ENCODE measurements at regions of chr15 and their contacts with region 1.

Region 1: DNA sequence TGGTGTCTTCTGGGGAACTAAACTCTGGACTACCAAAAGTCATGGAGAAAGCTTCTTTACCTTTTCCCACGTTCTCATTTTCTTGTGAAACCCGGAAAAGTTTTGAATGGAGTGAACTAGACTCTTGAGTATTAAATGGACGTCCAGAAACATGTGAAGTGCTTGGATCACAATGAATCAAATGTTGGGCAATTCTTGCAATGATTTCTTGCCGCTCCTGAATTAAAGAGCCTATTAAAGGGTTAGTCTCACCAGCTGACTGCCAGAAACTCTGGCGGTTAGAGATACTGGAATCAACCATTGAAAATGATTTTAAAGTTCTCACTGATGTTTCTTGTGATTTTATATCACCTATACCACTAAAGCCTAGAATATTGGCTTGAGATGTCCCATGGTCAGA is 40.8 kb upstream of the ARPP19 start:
- DNase-seq: no peak
- ATAC-seq: no peak
- H3K4me3 ChIP-seq: no peak overlapping the region
- H3K4me3 Mint-ChIP-seq: no peak overlapping the region
- H3K27ac ChIP-seq: no peak overlapping the region
- H3K27ac Mint-ChIP-seq: no peak overlapping the region
- H3K4me1 ChIP-seq: no peaks in the 10 kb centered on the region
- H3K4me1 Mint-ChIP-seq: no peaks in the 10 kb centered on the region
- H3K27me3 ChIP-seq: no peaks in the 10 kb centered on the region
- H3K27me3 Mint-ChIP-seq: no peaks in the 10 kb centered on the region

Region 2: DNA sequence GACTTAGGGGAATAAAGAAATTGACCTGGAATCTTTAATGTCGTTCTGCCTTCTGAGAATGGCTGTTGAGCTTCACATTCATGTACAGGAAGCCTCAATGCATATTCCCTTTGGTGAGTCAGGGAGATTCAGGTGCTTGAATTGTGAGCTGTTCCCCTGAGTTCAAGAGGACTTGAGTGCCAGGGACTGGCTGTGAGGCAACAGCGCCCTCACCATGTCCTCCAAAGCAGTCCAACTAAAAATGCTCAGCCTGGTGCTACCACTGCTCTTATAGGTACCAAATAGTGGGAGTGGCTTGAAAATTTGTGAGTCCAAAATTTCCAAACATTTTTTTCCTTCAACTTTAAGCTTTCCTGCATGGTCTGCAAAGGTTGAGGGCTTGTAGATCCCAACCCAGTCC is 692.1 kb before region 1 on chr15:
- CTCF ChIA-PET with region 1: no interaction called
- POLR2A ChIA-PET with region 1: no interaction called
- intact Hi-C with region 1: loop called in 1 of 2 experiments (anchors 10 kb)
- DNase-seq: peak in 1 of 9 donors; percentile 4
- ATAC-seq: no peak
- H3K4me3 ChIP-seq: no peak overlapping the region
- H3K4me3 Mint-ChIP-seq: no peak overlapping the region
- H3K27ac ChIP-seq: no peak overlapping the region
- H3K27ac Mint-ChIP-seq: no peak overlapping the region
- H3K4me1 ChIP-seq: no peaks in the 10 kb centered on the region
- H3K4me1 Mint-ChIP-seq: no peaks in the 10 kb centered on the region
- H3K27me3 ChIP-seq: no peaks in the 10 kb centered on the region
- H3K27me3 Mint-ChIP-seq: no peaks in the 10 kb centered on the region

Region 3: GRCh38 chr15:52568601-52569256 is 40.9 kb before region 1 on chr15 and contains the start of gene ARPP19:
- CTCF ChIA-PET with region 1: no interaction called
- POLR2A ChIA-PET with region 1: no interaction called
- intact Hi-C with region 1: no loop called
- DNase-seq: peak; percentile 58 to 81 (median 76)
- ATAC-seq: peak; percentile 83
- H3K4me3 ChIP-seq: peak within 1 kb of the TSS; percentile 75
- H3K4me3 Mint-ChIP-seq: peak within 1 kb of the TSS; percentile 89 to 100 (median 96)
- H3K27ac ChIP-seq: peak within 1 kb of the TSS; percentile 98
- H3K27ac Mint-ChIP-seq: peak within 1 kb of the TSS; percentile 95 to 100 (median 100)
- H3K4me1 ChIP-seq: peaks cover 13 to 25% of the 10 kb centered on the region in 2 donors
- H3K4me1 Mint-ChIP-seq: peaks cover 28 to 46% (median 42%) of the 10 kb centered on the region in 7 donors
- H3K27me3 ChIP-seq: no peaks in the 10 kb centered on the region
- H3K27me3 Mint-ChIP-seq: peaks cover 0 to 3% (median 0%) of the 10 kb centered on the region in 5 donors
- total RNA-seq, gene ARPP19: 94.9 to 148 (median 122) TPM

Region 4: GRCh38 chr15:52730173-52730572 is 120.6 kb after region 1 on chr15:
- CTCF ChIA-PET with region 1: no interaction called
- POLR2A ChIA-PET with region 1: no interaction called
- intact Hi-C with region 1: loop called (anchors 5 to 10 kb)
- DNase-seq: peak in 7 of 9 donors; percentile 53 to 82 (median 75)
- ATAC-seq: peak; percentile 96
- H3K4me3 ChIP-seq: no peak overlapping the region
- H3K4me3 Mint-ChIP-seq: peak overlapping the region; percentile 10 to 69 (median 50)
- H3K27ac ChIP-seq: no peak overlapping the region
- H3K27ac Mint-ChIP-seq: peak overlapping the region; percentile 56 to 94 (median 87)
- H3K4me1 ChIP-seq: peaks cover 11 to 15% of the 10 kb centered on the region in 2 donors
- H3K4me1 Mint-ChIP-seq: peaks cover 6 to 31% (median 20%) of the 10 kb centered on the region in 7 donors
- H3K27me3 ChIP-seq: no peaks in the 10 kb centered on the region
- H3K27me3 Mint-ChIP-seq: no peaks in the 10 kb centered on the region

Region 5: GRCh38 chr15:52735231-52736089 is 125.9 kb after region 1 on chr15:
- CTCF ChIA-PET with region 1: no interaction called
- POLR2A ChIA-PET with region 1: no interaction called
- intact Hi-C with region 1: loop called (anchors 5 to 10 kb)
- DNase-seq: peak; percentile 22 to 83 (median 73)
- ATAC-seq: peak; percentile 90
- H3K4me3 ChIP-seq: no peak overlapping the region
- H3K4me3 Mint-ChIP-seq: no peak overlapping the region
- H3K27ac ChIP-seq: no peak overlapping the region
- H3K27ac Mint-ChIP-seq: peak overlapping the region in 3 of 9 donors; percentile 2 to 75 (median 55)
- H3K4me1 ChIP-seq: peaks cover under 1 to 4% of the 10 kb centered on the region in 2 donors
- H3K4me1 Mint-ChIP-seq: peaks cover 0 to 25% (median 7%) of the 10 kb centered on the region in 7 donors
- H3K27me3 ChIP-seq: no peaks in the 10 kb centered on the region
- H3K27me3 Mint-ChIP-seq: peaks cover 0 to 12% (median 3%) of the 10 kb centered on the region in 5 donors